ENCODE measurements at regions of chr6 and their contacts with region 1.

Region 1: GRCh38 chr6:159693128-159693893 is at the start of gene SOD2:
- DNase-seq: peak; percentile 75
- H3K4me3 Mint-ChIP-seq: peak within 1 kb of the TSS; percentile 94
- H3K27ac Mint-ChIP-seq: peak within 1 kb of the TSS; percentile 99
- H3K4me1 Mint-ChIP-seq: peaks cover 51% of the 10 kb centered on the region
- H3K27me3 Mint-ChIP-seq: no peaks in the 10 kb centered on the region
- total RNA-seq, gene SOD2: 78.3 and 81.0 TPM in 2 replicates

Region 2: DNA sequence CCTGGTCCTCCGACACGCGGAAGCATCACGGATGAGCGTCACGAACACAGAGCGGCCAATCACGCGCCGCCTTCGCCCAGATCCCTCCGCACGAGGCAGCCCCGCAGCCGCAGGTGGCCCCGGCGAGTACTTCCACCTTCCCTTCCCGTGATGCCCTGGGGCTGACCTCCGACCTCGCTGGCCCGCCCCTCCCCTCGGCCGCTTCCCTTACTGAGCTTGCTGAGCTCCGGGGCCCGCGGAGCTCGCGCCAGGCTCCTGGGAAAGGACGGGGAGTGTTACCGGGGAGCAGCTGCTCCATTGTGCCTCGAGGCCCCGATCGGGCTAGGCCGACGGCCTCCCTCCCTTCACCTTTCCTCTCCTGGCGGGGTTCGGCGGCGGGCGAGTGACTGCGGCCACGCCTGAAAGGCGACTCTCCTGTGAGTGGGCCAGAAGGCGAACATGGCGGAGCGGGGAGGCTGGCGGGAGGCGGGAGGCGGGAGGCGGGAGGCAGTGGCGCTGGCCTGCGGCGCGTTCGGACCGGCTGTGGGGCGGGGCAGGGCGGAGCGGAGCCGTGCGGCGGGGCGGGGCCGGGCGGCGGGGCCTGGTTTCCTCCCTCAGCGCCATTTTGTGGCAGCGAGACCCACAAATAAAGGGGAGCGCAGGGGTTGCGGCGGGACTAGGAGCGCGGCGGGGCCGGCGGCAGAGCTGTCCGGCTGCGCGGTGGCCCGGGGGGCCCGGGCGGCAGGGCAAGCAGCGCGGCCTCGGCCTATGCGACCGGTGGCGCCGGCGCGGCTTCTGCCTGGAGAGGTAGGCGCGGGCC is 33.8 kb after region 1 on chr6 and contains the start of gene WTAP:
- intact Hi-C with region 1: loop called (anchors 1 kb)
- DNase-seq: peak; percentile 95
- H3K4me3 Mint-ChIP-seq: peak within 1 kb of the TSS; percentile 93
- H3K27ac Mint-ChIP-seq: peak within 1 kb of the TSS; percentile 96
- H3K4me1 Mint-ChIP-seq: peaks cover 41% of the 10 kb centered on the region
- H3K27me3 Mint-ChIP-seq: no peaks in the 10 kb centered on the region
- total RNA-seq, gene WTAP: 125 and 136 TPM in 2 replicates

Region 3: DNA sequence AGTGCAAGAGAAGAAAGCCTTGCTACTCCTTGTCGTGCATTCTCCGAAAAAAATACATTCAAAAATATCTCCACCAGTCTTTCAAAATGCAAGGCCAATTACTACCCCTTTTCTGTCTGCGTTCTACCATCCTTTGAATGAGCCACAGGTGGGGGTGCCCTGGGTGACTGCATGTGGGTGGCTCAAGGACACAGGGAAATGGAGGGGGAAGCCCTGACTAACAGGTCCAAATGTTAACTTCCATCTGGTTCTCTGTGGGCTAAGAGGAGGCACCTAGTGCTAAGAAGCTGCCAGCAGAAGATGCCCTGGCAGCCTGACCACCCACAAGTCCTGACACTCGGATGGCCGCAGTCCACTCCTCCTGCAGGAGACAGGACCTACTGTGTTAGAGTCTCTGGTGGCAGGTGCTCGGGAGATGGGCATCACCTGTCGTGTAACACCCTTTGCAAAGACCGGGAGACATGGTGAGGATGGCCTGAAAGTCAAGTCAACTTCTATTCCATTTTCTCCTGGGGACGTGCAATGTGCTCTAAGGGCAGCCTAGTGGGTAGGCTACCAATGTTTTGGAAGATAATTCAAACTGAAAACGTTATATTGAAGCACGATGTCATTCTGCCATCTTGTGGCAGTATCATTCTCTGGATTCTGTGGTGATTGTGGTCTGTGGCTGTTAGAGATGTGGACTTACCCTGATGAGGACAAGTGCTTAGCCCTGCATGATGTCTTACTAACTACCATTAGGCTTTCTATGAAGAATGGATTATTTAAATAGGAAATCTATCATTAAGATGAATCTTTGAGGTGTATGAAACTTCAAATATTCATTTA is 248.2 kb after region 1 on chr6:
- intact Hi-C with region 1: loop called (anchors 1 kb)
- DNase-seq: peak; percentile 26
- H3K4me3 Mint-ChIP-seq: no peak overlapping the region
- H3K27ac Mint-ChIP-seq: no peak overlapping the region
- H3K4me1 Mint-ChIP-seq: peaks cover 10% of the 10 kb centered on the region
- H3K27me3 Mint-ChIP-seq: peaks cover 23% of the 10 kb centered on the region

Region 4: DNA sequence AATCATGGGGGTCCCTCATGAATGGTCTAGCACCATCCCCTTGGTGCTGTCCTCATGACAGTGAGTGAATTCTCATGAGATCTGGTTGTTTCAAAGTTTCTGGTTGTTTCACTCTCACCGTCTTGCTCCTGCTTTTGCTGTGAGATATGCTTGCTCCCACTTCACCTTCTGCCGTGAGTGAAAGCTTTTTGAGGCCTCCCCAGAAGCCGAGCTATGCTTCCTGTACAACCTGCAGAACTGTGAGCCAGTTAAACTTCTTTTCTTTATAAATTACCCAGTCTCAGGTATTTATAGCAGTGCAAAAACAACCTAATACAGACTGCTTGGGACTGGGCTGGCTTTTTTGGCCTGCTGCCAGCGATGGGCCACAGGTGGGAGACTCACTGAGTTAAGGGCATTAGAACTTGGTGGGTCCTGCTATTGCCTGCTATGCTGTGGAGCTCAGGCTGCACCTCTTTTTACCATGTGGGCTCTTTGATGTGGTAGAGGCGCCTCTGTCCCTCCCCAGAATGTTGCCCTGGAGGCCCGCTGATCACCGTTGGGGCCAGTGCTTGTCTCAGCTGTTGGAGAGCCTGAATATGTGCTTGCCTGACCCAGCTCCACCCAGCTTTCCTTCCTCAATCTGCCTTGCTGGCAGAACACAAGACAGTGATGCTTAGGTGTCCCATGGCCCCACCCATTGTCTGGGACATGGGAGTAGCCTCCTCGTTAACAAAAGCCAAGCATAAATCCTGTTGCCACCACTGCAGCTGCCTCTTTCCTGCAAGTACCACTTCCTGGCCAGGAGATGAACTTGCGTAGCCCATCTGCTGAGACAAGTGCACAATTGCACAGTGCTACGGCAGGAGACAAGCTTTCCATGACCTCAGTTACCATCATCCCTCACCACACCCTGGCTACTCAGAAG is 322.7 kb after region 1 on chr6:
- intact Hi-C with region 1: loop called (anchors 2 kb)
- DNase-seq: peak; percentile 64
- H3K4me3 Mint-ChIP-seq: peak overlapping the region; percentile 75
- H3K27ac Mint-ChIP-seq: peak overlapping the region; percentile 98
- H3K4me1 Mint-ChIP-seq: peaks cover 86% of the 10 kb centered on the region
- H3K27me3 Mint-ChIP-seq: no peaks in the 10 kb centered on the region

Region 5: DNA sequence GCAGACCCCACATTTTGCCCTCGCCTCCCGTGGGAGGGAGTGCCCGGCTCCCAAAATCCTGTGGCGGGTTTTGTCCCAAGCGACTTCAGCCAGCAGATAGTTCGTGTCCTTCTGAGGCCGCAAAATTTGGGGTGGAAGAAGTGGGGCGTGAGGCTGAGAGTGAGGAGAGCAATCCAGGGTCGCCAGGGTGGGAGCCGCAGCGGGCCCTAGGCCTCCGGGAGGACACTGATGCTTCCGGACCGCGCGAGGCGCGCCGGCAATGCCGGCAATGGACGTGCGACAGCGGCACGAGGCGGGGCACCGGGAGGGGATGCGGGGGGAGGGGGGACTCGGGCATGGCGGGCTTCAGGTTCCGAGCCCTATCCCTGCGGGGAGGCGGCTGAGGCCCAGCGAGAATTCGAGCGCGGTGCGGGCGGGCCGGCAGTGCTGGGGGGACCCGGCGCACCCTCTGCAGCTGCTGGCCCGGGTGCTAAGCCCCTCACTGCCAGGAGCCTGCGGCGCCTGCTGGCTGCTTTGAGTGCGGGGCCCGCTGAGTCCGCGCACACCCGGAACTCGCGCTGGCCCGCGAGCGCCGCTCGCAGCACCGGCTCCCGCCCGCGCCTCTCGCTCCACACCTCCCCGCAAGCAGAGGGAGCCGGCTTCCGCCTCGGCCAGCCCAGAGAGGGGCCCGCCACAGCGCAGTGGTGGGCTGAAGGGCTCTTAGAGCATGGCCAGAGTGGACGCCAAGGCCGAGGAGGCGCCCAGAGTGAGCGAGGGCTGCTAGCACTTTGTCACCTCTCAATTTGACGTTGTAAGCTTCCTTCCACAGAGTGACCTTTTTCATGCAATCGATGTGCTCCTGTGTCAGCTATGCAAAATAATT is 827.0 kb after region 1 on chr6:
- intact Hi-C with region 1: loop called (anchors 10 kb)
- DNase-seq: peak; percentile 63
- H3K4me3 Mint-ChIP-seq: peak overlapping the region; percentile 91
- H3K27ac Mint-ChIP-seq: peak overlapping the region; percentile 83
- H3K4me1 Mint-ChIP-seq: peaks cover 18% of the 10 kb centered on the region
- H3K27me3 Mint-ChIP-seq: peaks cover 40% of the 10 kb centered on the region